ENCODE measurements at regions of chr22 and their contacts with region 1.

Region 1: DNA sequence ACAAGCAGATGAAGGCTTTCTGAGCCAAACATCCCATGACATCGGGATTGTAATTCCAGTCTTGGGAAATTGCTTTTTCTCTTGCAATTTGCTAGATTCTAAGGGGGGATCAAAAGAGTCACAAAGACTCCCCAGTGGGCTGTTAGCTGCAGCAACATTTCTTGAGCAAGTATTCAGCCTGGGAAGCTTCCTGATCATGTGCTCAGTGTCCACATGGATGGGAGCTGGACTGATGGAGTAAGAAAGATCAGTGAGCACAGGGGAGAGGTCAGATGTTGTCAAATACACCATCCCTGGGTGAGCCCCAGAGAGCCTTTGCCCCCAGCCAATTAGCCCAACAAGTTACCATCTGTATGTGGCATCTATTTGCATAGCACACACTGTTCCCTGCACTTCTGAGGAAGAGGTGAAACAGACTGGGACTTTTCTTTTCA is 10.2 kb upstream of the GRK3 start:
- DNase-seq: no peak
- H3K4me3 ChIP-seq: no peak overlapping the region
- H3K27ac ChIP-seq: no peak overlapping the region
- H3K4me1 ChIP-seq: peaks cover 0 to 3% (median under 1%) of the 10 kb centered on the region in 4 experiments; a peak in 3 of 7 replicates
- H3K27me3 ChIP-seq: no peaks in the 10 kb centered on the region
- CTCF ChIP-seq: no peak
- EP300 ChIP-seq: no peak
- POLR2A ChIP-seq: no peak
- RAD21 ChIP-seq: no peak

Region 2: DNA sequence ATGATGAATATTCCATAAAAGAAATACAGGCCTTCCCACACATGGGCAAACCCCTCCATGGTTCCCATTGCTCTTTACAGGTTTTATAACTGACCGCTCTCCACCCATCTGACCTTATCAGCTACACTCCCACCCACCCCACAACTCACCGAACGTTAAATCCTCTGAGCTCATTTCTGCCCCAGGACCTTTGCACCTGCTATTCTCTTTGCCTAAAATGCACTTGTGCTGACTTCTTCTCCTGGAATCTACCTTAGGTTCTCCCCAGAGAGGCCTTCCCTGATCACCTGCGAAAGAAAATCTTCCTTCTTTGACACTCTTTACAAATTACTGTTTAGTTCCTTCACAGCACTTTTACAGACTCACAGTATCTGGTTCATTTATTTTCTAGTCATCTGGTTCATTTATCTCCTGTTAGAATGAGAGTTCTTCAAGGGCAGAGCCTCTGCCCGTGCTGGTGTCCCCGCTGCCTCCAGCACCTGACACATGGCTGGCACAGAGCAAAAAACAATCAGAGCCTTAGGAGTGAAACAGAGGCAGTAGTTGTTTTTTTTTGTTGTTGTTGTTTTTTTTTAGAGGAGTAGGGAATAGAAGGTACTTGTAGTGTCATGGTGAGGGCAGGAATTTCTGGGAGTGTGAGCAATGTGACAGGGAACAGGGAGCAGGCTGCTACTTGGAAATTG is 11.4 kb before region 1 on chr22:
- CTCF ChIA-PET with region 1: interaction called, 12 read pairs
- POLR2A ChIA-PET with region 1: no interaction called
- DNase-seq: no peak
- H3K4me3 ChIP-seq: no peak overlapping the region
- H3K27ac ChIP-seq: no peak overlapping the region
- H3K4me1 ChIP-seq: peaks cover 0 to 5% (median 2%) of the 10 kb centered on the region in 4 experiments; a peak in 3 of 7 replicates
- H3K27me3 ChIP-seq: no peaks in the 10 kb centered on the region; a peak in 1 of 7 replicates
- CTCF ChIP-seq: no peak
- EP300 ChIP-seq: no peak
- POLR2A ChIP-seq: no peak
- RAD21 ChIP-seq: no peak